ENCODE measurements at regions of chr15 and their contacts with region 1.

Region 1: GRCh38 chr15:77633134-77633912 is 611 bp upstream of the LINGO1 start:
- H3K4me3 Mint-ChIP-seq: peak overlapping the region; percentile 65
- H3K27ac Mint-ChIP-seq: no peak overlapping the region
- H3K4me1 Mint-ChIP-seq: peaks cover 13% of the 10 kb centered on the region
- H3K27me3 Mint-ChIP-seq: peaks cover 89% of the 10 kb centered on the region

Region 2: DNA sequence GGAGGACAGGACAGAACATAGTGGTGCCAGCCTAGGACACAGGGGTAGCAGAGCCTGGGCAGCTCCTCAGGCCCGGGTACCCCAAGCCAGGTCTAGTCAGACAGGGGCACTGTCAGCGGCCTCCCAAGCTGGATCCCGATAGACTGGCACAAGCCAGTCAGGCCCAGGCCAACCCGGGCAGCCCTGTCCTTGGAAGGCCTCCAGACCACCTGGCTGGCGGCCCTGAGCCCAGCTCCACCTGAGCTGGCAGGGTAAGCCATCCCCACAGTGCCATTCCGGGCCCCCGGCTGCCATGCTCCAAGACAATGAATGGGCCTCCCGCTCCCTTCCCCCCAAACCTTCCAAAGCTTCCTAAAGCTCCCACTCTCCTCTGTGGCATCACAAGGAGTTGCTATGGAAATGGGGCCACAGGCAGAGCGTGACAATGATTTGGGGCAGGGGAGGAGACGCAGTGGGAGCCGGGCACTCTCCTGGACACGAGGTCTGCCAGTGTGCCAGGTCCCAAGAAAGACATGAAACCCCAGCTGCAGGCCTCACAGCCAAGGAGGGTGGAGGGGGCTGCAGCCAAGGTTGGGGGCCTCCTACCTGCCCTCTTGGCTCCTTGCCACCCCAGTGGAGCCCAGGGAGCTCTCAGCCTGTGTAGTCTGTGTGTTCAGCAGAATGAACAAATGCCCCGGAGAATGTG is 165.0 kb after region 1 on chr15:
- intact Hi-C with region 1: no loop called
- H3K4me3 Mint-ChIP-seq: no peak overlapping the region
- H3K27ac Mint-ChIP-seq: no peak overlapping the region
- H3K4me1 Mint-ChIP-seq: no peaks in the 10 kb centered on the region
- H3K27me3 Mint-ChIP-seq: peaks cover 9% of the 10 kb centered on the region

Region 3: DNA sequence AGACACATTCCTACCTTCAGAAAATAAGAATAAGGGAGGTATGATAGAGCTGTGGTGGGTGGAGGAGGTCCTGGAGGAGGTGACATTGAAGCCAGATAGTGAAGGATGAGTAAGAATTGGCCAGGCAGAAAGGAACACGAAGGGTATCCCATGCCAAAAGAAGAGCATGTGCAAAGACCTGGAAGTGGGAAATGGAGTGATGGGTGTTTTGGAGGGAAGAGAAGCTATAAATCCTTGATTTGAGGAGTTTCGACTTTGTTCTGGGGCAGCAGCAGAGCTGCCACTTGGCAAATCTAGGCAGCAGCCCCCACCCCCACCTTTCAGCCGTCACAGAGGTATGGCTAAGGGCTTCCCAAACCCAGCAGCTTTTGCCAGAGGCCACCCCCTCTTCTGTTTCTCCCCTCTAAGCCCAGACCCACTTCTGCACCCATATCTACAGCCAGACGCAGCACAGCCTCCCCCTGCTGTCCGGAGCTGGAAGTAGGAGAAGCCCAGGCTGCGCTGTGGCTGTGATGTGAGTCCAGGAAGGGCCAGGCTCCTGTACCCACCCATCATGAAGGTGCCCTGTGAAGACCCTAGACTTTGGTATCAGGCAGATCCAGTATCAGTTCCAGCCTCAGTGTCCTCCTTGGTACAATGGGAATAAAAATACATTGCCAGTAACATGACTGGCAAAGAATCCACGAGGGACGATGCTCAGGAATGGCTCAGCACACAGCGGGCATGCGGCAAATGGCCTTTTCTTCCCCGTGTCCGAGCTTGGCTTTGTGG is 188.1 kb after region 1 on chr15:
- intact Hi-C with region 1: loop called (anchors 5 kb)
- H3K4me3 Mint-ChIP-seq: no peak overlapping the region
- H3K27ac Mint-ChIP-seq: no peak overlapping the region
- H3K4me1 Mint-ChIP-seq: no peaks in the 10 kb centered on the region
- H3K27me3 Mint-ChIP-seq: peaks cover 60% of the 10 kb centered on the region

Region 4: GRCh38 chr15:77870195-77871065 is 237.1 kb after region 1 on chr15:
- intact Hi-C with region 1: loop called (anchors 10 kb)
- H3K4me3 Mint-ChIP-seq: no peak overlapping the region
- H3K27ac Mint-ChIP-seq: no peak overlapping the region
- H3K4me1 Mint-ChIP-seq: no peaks in the 10 kb centered on the region
- H3K27me3 Mint-ChIP-seq: peaks cover 12% of the 10 kb centered on the region